ENCODE measurements at regions of chr4 and their contacts with region 1.

Region 1: DNA sequence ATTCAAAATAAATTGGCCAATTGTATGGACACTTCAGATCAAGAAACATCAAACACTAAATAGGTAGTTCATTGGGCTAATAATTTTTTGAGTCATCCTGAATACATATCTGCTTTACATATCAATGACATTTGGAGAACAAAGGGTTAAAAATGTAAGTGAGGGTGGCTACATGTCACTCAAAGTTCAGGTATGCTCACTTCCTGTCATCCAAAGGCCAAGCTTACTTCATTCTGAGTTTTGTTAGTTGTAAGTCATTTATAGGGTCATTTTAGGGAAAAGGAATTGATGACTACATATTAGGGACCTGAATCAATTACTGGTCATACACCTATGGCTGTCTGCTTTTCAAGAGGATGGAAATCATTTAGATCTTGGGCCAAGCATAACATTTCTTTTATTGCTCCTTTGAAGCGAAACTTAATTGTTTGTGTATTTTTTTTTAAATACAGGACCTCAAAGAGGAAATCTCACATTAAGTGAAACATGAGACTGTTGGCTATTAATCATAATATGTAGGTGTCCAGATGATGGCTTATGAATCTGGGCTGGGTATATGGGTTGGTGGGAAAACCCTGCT is 119.2 kb upstream of the LEF1 start:
- DNase-seq: no peak
- H3K4me3 ChIP-seq: no peak overlapping the region
- CTCF ChIP-seq: no peak

Region 2: GRCh38 chr4:107888237-107888636 is 399.7 kb before region 1 on chr4:
- in situ Hi-C with region 1: no loop called
- DNase-seq: no peak
- H3K4me3 ChIP-seq: no peak overlapping the region
- CTCF ChIP-seq: no peak

Region 3: DNA sequence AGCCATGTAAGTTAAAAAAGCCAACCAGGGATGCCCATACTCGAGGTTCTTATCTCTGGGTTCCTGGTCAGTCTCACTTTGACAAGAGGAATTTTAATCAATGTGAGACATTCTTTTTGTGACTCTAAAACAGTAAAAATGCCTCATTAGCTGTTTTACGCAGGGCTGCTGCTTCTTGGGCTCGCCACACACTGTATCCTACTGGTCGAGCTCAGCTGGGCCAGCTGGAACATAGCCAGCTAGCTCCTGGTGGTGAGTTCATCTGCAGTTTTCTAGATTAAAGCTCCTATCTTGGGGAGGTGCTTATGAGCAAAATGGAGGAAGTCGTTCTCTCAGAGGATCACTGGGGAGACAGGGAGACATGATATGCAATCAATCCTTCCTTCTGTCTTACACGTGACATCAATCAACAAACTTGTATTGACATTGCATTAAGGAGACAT is 63.3 kb before region 1 on chr4:
- in situ Hi-C with region 1: no loop called
- DNase-seq: peak; percentile 59
- H3K4me3 ChIP-seq: no peak overlapping the region
- CTCF ChIP-seq: peak; percentile 20

Region 4: GRCh38 chr4:108327642-108328382 is 39.9 kb after region 1 on chr4:
- in situ Hi-C with region 1: loop called (anchors 5 kb)
- DNase-seq: no peak
- H3K4me3 ChIP-seq: no peak overlapping the region
- CTCF ChIP-seq: no peak

Measured in astrocyte of the cerebellum (primary cell).